Transverse colon (tissue), 4 donors: ENCODE measurements at regions of chr20 and their contacts with region 1.

Region 1: GRCh38 chr20:1325173-1326030 is 3.5 kb downstream of the SDCBP2 start:
- DNase-seq: peak; percentile 98
- H3K4me3 ChIP-seq: peak overlapping the region; percentile 42 to 83 (median 78)
- H3K27ac ChIP-seq: peak overlapping the region; percentile 93 to 99 (median 98)
- H3K4me1 ChIP-seq: peaks cover 35 to 57% (median 49%) of the 10 kb centered on the region in 4 donors
- H3K27me3 ChIP-seq: no peaks in the 10 kb centered on the region
- CTCF ChIP-seq: peak; percentile 19 to 77 (median 35)
- EP300 ChIP-seq: no peak
- POLR2A ChIP-seq: peak; percentile 93

Region 2: GRCh38 chr20:1336699-1337367 is 11.4 kb after region 1 on chr20:
- in situ Hi-C with region 1: no loop called
- intact Hi-C with region 1: no loop called
- DNase-seq: peak; percentile 60
- H3K4me3 ChIP-seq: no peak overlapping the region
- H3K27ac ChIP-seq: peak overlapping the region; percentile 23 to 33 (median 26)
- H3K4me1 ChIP-seq: peaks cover 6 to 14% (median 10%) of the 10 kb centered on the region in 4 donors
- H3K27me3 ChIP-seq: no peaks in the 10 kb centered on the region
- CTCF ChIP-seq: no peak
- EP300 ChIP-seq: no peak
- POLR2A ChIP-seq: no peak

Region 3: GRCh38 chr20:1392823-1393506 is 67.6 kb after region 1 on chr20 and contains the start of gene FKBP1A:
- in situ Hi-C with region 1: loop called in 1 of 4 experiments (anchors 10 kb)
- intact Hi-C with region 1: loop called (anchors 2 kb)
- DNase-seq: peak; percentile 93
- H3K4me3 ChIP-seq: peak within 1 kb of the TSS; percentile 83 to 97 (median 92)
- H3K27ac ChIP-seq: peak within 1 kb of the TSS; percentile 90 to 94 (median 92)
- H3K4me1 ChIP-seq: peaks cover 30 to 52% (median 44%) of the 10 kb centered on the region in 4 donors
- H3K27me3 ChIP-seq: no peaks in the 10 kb centered on the region
- CTCF ChIP-seq: peak in 2 of 5 experiments; percentile 39
- EP300 ChIP-seq: peak; percentile 28
- POLR2A ChIP-seq: peak; percentile 81
- total RNA-seq, gene FKBP1A: 120 to 202 (median 144) TPM

Region 4: GRCh38 chr20:1509237-1509636 is 183.8 kb after region 1 on chr20:
- in situ Hi-C with region 1: no loop called
- intact Hi-C with region 1: no loop called
- DNase-seq: no peak
- H3K4me3 ChIP-seq: no peak overlapping the region
- H3K27ac ChIP-seq: no peak overlapping the region
- H3K4me1 ChIP-seq: no peaks in the 10 kb centered on the region
- H3K27me3 ChIP-seq: peaks cover 14% of the 10 kb centered on the region
- CTCF ChIP-seq: peak in 1 of 5 experiments; percentile 27
- EP300 ChIP-seq: no peak
- POLR2A ChIP-seq: no peak